ENCODE measurements at regions of chr22 and their contacts with region 1.

Region 1: DNA sequence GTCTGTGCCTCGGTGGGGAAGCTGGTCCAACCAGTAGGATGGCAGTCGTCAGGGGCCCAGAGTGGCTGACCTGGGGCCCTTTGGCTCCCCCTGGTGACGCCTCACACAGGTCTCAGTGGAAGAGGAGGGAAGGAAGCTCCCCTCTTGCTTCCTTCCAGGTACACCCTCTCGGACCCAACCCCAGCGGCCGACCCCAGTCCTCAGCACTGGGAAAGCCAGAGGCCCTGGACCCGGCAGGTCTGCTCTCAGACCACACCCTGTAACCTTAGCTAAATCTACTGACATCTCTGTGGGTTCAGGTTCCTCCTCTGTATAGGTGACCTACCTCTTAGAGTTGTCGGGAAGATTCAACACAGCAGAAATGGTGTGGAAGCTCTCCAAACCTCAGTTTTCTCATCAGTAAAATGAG is 3.4 kb upstream of the SCUBE1 start:
- DNase-seq: peak; percentile 83
- ATAC-seq: peak; percentile 72
- H3K4me3 Mint-ChIP-seq: no peak overlapping the region
- H3K27ac Mint-ChIP-seq: peak overlapping the region; percentile 95
- H3K4me1 Mint-ChIP-seq: peaks cover 44% of the 10 kb centered on the region
- H3K27me3 Mint-ChIP-seq: peaks cover 47% of the 10 kb centered on the region

Region 2: GRCh38 chr22:43263645-43264514 is 82.6 kb before region 1 on chr22:
- CTCF ChIA-PET with region 1: interaction called, 139 read pairs
- DNase-seq: peak; percentile 96
- ATAC-seq: peak; percentile 90
- H3K4me3 Mint-ChIP-seq: peak overlapping the region; percentile 68
- H3K27ac Mint-ChIP-seq: peak overlapping the region; percentile 92
- H3K4me1 Mint-ChIP-seq: peaks cover 31% of the 10 kb centered on the region
- H3K27me3 Mint-ChIP-seq: peaks cover 6% of the 10 kb centered on the region

Region 3: DNA sequence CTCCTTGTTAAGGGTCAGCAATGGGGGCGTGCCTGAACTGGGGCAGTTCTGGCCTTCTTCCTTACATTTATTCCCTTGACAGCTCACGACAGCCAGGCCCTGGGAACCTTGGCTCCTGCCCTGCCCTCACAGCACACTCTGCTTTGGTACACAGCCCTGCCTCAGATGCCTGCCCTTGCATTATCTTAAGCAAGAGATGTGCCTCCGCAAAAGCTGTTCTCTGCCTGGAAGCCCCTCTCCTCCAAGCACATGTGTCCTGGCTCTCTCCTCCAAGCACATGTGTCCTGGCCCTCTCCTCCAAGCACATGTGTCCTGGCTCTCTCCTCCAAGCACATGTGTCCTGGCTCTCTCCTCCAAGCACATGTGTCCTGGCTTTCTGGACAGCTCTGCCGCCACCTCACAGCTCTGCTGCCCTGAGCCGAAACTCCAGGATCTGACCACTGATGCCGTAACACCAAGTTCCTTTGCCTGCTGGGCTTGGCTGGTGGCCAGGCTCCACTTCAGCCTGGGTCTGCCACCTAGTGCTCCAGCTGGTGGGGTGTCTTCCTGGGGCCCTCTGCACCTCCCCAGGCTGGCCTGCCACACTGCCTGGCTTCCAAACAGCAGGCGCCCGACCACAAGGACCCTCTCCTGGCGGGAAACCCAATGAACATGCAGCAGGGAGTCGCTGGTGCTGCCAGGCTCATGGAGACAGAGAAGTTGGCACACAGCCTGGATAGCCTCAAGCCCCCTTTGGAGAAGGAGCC is 56.4 kb before region 1 on chr22:
- CTCF ChIA-PET with region 1: interaction called, 33 read pairs
- DNase-seq: no peak
- ATAC-seq: no peak
- H3K4me3 Mint-ChIP-seq: no peak overlapping the region
- H3K27ac Mint-ChIP-seq: peak overlapping the region; percentile 39
- H3K4me1 Mint-ChIP-seq: peaks cover 17% of the 10 kb centered on the region
- H3K27me3 Mint-ChIP-seq: no peaks in the 10 kb centered on the region

Region 4: DNA sequence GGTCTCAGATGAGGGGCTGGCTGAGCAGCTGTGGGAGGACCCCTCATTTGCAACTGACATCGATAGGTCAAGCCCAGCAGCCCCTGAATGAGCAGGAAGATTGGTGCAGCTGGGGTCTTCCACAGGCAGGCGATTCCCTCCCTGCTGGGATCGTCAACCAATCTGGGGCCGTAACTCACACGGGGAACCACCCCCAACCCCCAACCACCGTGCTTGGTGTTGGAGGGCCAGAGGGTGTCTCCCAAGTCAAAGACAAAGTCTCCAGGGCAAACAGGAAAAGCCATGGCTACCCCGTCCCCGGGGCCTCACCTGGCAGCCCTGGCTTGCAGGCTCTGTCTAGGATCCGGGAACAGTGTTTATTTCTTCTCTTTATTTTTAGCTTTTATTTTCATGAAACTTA is 23.5 kb after region 1 on chr22:
- CTCF ChIA-PET with region 1: interaction called, 30 read pairs
- DNase-seq: no peak
- ATAC-seq: no peak
- H3K4me3 Mint-ChIP-seq: no peak overlapping the region
- H3K27ac Mint-ChIP-seq: no peak overlapping the region
- H3K4me1 Mint-ChIP-seq: no peaks in the 10 kb centered on the region
- H3K27me3 Mint-ChIP-seq: peaks cover 78% of the 10 kb centered on the region

Region 5: GRCh38 chr22:43385770-43386641 is 39.5 kb after region 1 on chr22:
- CTCF ChIA-PET with region 1: interaction called, 124 read pairs
- DNase-seq: peak; percentile 83
- ATAC-seq: peak; percentile 89
- H3K4me3 Mint-ChIP-seq: no peak overlapping the region
- H3K27ac Mint-ChIP-seq: no peak overlapping the region
- H3K4me1 Mint-ChIP-seq: peaks cover 36% of the 10 kb centered on the region
- H3K27me3 Mint-ChIP-seq: peaks cover 61% of the 10 kb centered on the region